ENCODE measurements at regions of chr1 and their contacts with region 1.

Region 1: DNA sequence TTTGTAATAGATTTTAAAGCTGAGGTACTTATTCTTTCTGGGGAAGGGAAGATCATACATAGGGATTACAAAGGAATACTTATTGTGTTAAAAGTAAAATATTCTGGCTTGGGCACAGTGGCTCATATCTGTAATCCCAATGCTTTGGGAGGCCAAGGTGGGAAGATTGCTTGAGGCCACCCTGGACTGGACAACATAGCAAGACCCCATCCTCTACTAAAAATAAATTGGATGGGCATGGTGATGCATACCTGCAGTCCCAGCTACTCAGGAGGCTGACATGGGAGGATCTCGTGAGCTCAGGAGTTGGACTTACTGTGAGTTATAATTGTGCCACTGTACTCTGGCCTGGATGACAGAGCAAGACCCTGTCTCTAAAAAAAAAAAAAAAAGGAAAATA is 27.6 kb downstream of the GABPB2 start:
- DNase-seq: no peak
- ATAC-seq: no peak
- H3K4me3 ChIP-seq: no peak overlapping the region
- H3K27ac ChIP-seq: no peak overlapping the region
- H3K4me1 ChIP-seq: no peaks in the 10 kb centered on the region
- H3K27me3 ChIP-seq: no peaks in the 10 kb centered on the region
- CTCF ChIP-seq: no peak
- EP300 ChIP-seq: no peak
- POLR2A ChIP-seq: no peak
- RAD21 ChIP-seq: no peak

Region 2: DNA sequence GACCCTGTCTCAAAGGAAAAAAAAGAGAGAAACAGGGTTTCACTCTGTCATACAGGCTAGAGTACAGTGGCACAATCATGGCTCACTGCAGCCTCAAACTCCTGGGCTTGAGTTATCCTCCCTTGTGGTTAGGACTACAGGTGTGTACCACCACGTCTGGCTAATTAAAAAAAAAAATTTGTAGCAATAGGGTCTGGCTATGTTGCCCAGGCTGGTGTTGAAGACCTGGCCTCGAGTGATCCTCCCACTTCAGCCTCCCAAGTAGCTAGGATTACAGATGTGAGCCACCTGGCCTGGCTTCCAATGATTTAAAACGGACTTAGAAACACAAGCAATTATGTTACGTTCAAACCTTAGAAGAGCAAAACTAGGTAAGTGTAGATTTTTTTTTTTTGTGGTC is 423.2 kb before region 1 on chr1:
- CTCF ChIA-PET with region 1: no interaction called
- POLR2A ChIA-PET with region 1: no interaction called
- RAD21 ChIA-PET with region 1: no interaction called
- SMC1A ChIA-PET with region 1: no interaction called
- in situ Hi-C with region 1: no loop called
- intact Hi-C with region 1: no loop called
- DNase-seq: no peak
- ATAC-seq: no peak
- H3K4me3 ChIP-seq: no peak overlapping the region
- H3K27ac ChIP-seq: no peak overlapping the region
- H3K4me1 ChIP-seq: no peaks in the 10 kb centered on the region
- H3K27me3 ChIP-seq: no peaks in the 10 kb centered on the region
- CTCF ChIP-seq: no peak
- EP300 ChIP-seq: no peak
- POLR2A ChIP-seq: no peak
- RAD21 ChIP-seq: no peak

Region 3: DNA sequence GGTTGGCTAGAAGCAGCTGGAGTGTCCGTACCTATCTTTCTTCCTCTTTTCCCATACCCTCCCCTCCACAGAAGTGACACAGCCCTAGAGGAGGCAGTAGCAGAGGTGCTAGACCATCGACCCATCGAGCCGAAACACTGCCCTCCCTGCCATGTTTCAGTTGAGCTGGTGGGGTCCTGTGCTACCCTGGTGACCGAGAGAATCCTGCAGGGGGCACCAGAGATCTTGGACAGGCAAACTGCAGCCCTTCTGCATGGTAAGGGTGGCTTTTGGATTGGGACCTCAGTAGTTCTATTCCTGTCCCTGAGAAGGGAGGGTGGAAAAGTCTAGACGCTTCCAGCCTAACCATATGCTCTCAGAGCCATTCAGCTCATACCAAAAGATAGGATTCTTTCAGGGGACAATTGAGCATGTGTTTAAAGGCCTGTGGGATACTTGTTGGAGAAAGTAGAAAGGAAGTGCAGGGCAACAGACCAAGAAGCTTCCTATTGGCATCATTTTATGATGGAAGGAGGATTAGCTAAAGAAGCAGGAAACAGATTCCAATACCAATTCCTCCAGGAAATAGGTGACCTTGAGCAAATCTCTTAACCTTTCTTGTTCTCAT is 73.5 kb before region 1 on chr1:
- CTCF ChIA-PET with region 1: interaction called, 40 read pairs
- POLR2A ChIA-PET with region 1: no interaction called
- RAD21 ChIA-PET with region 1: interaction called, 26 read pairs
- SMC1A ChIA-PET with region 1: interaction called, 18 read pairs
- in situ Hi-C with region 1: no loop called
- intact Hi-C with region 1: no loop called
- DNase-seq: no peak
- ATAC-seq: peak; percentile 100
- H3K4me3 ChIP-seq: no peak overlapping the region
- H3K27ac ChIP-seq: no peak overlapping the region
- H3K4me1 ChIP-seq: no peaks in the 10 kb centered on the region
- H3K27me3 ChIP-seq: no peaks in the 10 kb centered on the region
- CTCF ChIP-seq: peak; percentile 79 to 91 (median 84)
- EP300 ChIP-seq: no peak
- POLR2A ChIP-seq: no peak
- RAD21 ChIP-seq: peak; percentile 86

Region 4: DNA sequence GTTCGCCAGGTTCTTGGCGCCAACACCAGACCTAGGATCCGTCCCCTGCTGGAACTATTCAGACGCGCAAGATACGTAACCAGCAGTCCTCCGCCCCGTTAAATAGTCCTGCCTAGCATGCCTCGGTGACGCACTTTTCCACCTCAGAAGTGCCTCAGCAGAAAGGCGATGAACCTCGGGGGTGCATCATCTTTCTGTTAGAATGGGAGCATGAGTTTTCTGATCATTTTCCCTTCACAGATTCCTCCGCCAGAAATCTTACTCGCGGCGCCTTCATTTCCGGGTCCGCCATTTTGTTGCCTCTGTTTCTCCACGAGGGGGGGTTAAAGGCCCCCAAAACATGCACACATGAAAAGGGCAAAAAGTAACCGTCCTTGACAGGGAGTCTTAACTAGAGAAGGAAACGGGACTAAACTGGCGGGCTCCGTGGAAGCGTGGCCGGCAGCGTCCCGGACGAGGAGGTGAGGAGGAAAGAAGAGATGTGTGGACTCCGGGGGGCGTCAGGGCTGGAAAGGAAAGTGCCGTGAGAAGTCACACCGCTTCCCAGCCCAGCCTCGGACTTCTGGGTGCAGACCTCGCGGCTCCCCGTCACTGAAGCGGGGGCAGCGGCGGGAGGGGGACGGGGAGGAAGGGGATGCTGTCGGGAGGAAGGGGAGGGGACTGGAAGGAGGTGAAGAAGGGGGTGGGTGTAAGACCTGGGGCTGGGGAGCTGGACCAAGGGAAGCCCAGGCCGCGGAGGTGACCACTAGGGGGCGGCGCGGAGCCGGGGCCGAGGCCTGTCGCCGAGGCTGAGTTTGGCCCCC is 27.5 kb before region 1 on chr1 and contains the start of gene GABPB2:
- CTCF ChIA-PET with region 1: interaction called, 24 read pairs
- POLR2A ChIA-PET with region 1: no interaction called
- RAD21 ChIA-PET with region 1: interaction called, 6 read pairs
- SMC1A ChIA-PET with region 1: interaction called, 9 read pairs
- in situ Hi-C with region 1: no loop called
- intact Hi-C with region 1: no loop called
- DNase-seq: peak; percentile 72
- ATAC-seq: peak; percentile 97
- H3K4me3 ChIP-seq: peak within 1 kb of the TSS; percentile 99
- H3K27ac ChIP-seq: peak within 1 kb of the TSS; percentile 100
- H3K4me1 ChIP-seq: peaks cover 8% of the 10 kb centered on the region
- H3K27me3 ChIP-seq: no peaks in the 10 kb centered on the region
- CTCF ChIP-seq: peak; percentile 82 to 98 (median 85)
- EP300 ChIP-seq: no peak
- POLR2A ChIP-seq: peak; percentile 92
- RAD21 ChIP-seq: peak; percentile 29; the same call in 1 of the 2 replicates
- polyA plus RNA-seq, gene GABPB2: 2.3 to 2.6 TPM

Region 5: GRCh38 chr1:151133011-151133806 is 35.1 kb after region 1 on chr1:
- CTCF ChIA-PET with region 1: interaction called, 15 read pairs
- POLR2A ChIA-PET with region 1: no interaction called
- RAD21 ChIA-PET with region 1: interaction called, 4 read pairs
- SMC1A ChIA-PET with region 1: no interaction called
- in situ Hi-C with region 1: no loop called
- intact Hi-C with region 1: no loop called
- DNase-seq: no peak
- ATAC-seq: no peak
- H3K4me3 ChIP-seq: no peak overlapping the region
- H3K27ac ChIP-seq: no peak overlapping the region
- H3K4me1 ChIP-seq: peaks cover 8% of the 10 kb centered on the region; the same call in 1 of the 2 replicates
- H3K27me3 ChIP-seq: no peaks in the 10 kb centered on the region
- CTCF ChIP-seq: no peak
- EP300 ChIP-seq: no peak
- POLR2A ChIP-seq: no peak
- RAD21 ChIP-seq: no peak

Region 6: DNA sequence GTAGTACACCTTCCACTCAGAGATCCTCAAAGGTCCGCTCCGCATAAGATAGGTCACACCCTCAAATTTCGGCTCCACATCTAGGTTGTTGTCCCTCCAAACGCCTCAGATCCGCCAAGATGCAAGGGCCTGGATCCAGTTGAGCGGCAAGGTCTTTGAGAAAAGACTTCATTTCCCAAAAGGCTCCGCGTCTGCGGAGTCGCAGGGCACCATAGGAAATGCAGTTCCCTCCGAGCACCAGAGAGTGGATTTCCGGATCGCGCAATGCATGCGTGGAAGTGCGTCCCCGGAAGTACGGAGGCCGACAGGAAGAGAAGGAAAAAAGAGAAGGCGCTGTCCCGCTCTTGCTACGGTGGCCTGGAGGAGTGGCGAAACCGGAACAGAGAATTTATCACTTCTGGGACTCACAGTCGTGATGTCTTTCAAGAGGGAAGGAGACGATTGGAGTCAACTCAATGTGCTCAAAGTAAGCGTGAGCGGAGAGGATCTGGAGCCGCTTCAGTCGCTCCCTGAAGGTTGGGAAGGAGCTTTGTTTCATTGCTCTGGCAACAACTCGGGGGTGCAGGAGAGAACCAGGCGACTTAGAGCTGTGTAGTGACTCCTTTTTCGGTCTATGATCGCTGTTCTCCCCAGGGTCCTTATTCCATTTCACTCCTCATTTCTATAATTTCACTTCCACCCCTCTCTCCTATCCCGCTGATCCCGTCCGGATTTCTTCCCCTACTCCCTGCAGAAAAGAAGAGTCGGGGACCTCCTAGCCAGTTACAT is 67.8 kb after region 1 on chr1 and contains the starts of genes LYSMD1 and SCNM1:
- CTCF ChIA-PET with region 1: interaction called, 11 read pairs
- POLR2A ChIA-PET with region 1: interaction called, 6 read pairs
- RAD21 ChIA-PET with region 1: interaction called, 5 read pairs
- SMC1A ChIA-PET with region 1: interaction called, 282 read pairs
- in situ Hi-C with region 1: no loop called
- intact Hi-C with region 1: no loop called
- DNase-seq: peak; percentile 97
- ATAC-seq: peak; percentile 98
- H3K4me3 ChIP-seq: peak within 1 kb of the TSS; percentile 98
- H3K27ac ChIP-seq: peak within 1 kb of the TSS; percentile 70
- H3K4me1 ChIP-seq: peaks cover 9% of the 10 kb centered on the region
- H3K27me3 ChIP-seq: no peaks in the 10 kb centered on the region
- CTCF ChIP-seq: no peak
- EP300 ChIP-seq: 0 out of 4 replicates have a peak, but pooled peaks of 1 of the 2 experiments have one; percentile 7
- POLR2A ChIP-seq: peak; percentile 83
- RAD21 ChIP-seq: no peak
- polyA plus RNA-seq, gene LYSMD1: 0.80 to 1.9 TPM
- polyA plus RNA-seq, gene SCNM1: 191 to 207 TPM

Region 7: DNA sequence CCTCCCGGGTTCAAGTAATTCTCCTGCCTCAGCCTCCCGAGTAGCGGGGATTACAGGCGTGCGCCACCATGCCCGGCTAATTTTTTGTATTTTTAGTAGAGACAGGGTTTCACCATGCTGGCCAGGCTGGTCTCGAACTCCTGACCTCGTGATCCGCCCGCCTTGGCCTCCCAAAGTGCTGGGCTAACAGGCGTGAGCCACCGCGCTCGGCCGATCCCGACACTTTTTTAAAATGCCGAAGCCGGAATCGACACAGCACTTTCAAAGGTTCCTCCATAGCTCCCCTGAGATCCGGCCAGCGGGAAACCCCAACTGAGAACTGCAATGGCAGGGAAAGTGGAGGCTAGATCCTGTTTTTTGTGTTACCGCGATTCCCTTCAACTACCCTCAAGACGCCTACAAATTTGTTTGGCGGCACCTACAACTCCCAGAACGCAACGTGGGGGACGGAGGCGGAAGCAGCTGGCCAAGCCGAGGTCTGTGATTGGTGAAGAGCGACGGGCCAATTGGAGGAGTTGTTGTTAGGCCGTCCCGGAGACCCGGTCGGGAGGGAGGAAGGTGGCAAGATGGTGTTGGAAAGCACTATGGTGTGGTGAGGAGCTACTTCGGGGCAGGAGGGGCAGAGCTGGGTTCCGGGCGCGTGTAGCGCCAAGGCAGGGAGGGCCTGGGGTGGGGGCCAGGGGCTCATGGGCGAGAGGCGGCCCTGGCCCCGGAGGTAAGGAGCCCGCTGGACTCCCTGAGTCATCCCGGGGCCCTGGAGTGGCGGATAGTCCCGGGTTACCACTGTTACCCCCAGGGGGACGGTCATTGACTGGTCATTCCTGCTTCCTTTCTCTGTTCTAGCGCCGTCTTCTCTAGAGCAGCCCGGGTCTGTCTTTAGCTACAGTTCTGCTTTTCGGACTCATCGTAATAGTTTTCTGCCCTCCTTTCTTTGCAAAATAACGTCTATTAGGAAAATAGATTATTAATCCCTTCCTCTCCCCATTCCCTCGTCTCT is 156.4 kb after region 1 on chr1 and contains the start of gene PSMD4:
- CTCF ChIA-PET with region 1: interaction called, 39 read pairs
- POLR2A ChIA-PET with region 1: interaction called, 3 read pairs
- RAD21 ChIA-PET with region 1: interaction called, 41 read pairs
- SMC1A ChIA-PET with region 1: interaction called, 23 read pairs
- in situ Hi-C with region 1: no loop called
- intact Hi-C with region 1: loop called (anchors 2 kb)
- DNase-seq: peak; percentile 96
- ATAC-seq: peak; percentile 95
- H3K4me3 ChIP-seq: peak within 1 kb of the TSS; percentile 81
- H3K27ac ChIP-seq: peak within 1 kb of the TSS; percentile 87
- H3K4me1 ChIP-seq: peaks cover 2% of the 10 kb centered on the region; the same call in 1 of the 2 replicates
- H3K27me3 ChIP-seq: no peaks in the 10 kb centered on the region
- CTCF ChIP-seq: no peak
- EP300 ChIP-seq: no peak
- POLR2A ChIP-seq: peak; percentile 94
- RAD21 ChIP-seq: no peak
- polyA plus RNA-seq, gene PSMD4: 129 to 190 TPM